ENCODE measurements at regions of chr2 and their contacts with region 1.

Region 1: DNA sequence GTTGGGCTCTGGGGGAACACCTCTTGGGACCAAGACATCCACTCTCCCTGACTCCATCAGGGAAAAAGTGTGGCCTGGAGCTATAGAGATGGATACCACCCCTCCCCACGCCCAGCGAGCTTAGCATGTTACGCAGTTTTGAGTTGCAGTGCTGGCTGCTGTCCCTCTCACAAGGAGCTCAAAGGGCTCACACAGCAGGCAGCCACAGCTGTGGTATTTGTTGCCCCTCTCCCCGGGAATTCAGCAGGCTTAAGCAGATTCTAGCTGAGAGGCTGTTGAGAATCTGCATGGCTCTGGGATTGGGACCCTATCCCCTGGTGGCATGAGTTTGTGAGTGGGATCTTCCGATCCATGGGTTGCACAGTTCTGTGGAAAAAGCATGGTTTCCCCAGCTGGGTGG is 673.1 kb upstream of the FSHR start:
- DNase-seq: no peak
- ATAC-seq: no peak
- H3K4me3 ChIP-seq: no peak overlapping the region
- H3K4me1 ChIP-seq: no peaks in the 10 kb centered on the region
- CTCF ChIP-seq: no peak

Region 2: DNA sequence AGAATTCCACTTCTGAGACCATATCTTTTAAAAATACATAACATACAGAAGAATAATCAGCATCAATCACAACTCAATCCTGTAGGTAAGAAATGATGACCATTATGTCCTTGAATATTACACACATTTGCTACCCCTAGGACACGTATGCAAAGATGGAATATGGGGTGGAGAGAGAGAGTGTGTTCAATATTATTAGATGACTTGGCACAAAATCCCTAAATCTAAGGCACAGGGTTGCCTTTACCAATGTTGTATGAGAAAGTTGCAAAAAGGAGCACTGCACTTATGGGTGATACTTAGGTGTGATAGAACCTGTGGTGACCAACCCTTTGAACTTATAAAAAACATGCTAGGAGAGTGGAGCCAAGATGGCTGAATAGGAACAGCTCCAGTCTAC is 346.8 kb before region 1 on chr2:
- intact Hi-C with region 1: no loop called
- DNase-seq: no peak
- ATAC-seq: no peak
- H3K4me3 ChIP-seq: no peak overlapping the region
- H3K4me1 ChIP-seq: no peaks in the 10 kb centered on the region
- CTCF ChIP-seq: no peak

Region 3: GRCh38 chr2:49753344-49753985 is 73.9 kb before region 1 on chr2:
- intact Hi-C with region 1: loop called in 1 of 2 experiments (anchors 5 kb)
- DNase-seq: no peak
- ATAC-seq: no peak
- H3K4me3 ChIP-seq: no peak overlapping the region
- H3K4me1 ChIP-seq: no peaks in the 10 kb centered on the region
- CTCF ChIP-seq: no peak

Measured in mucosa of descending colon (tissue), 3 donors.